Pancreas (tissue), 10 donors: ENCODE measurements at regions of chr15 and their contacts with region 1.

Region 1: GRCh38 chr15:78308422-78309032 is 9.1 kb upstream of the SKIC8 start:
- DNase-seq: peak in 5 of 6 donors; percentile 41 to 83 (median 56)
- ATAC-seq: peak; percentile 67 to 93 (median 91)
- H3K4me3 ChIP-seq: no peak overlapping the region
- H3K27ac ChIP-seq: no peak overlapping the region
- H3K4me1 ChIP-seq: no peaks in the 10 kb centered on the region
- H3K27me3 ChIP-seq: no peaks in the 10 kb centered on the region
- CTCF ChIP-seq: peak; percentile 12 to 68 (median 57)

Region 2: DNA sequence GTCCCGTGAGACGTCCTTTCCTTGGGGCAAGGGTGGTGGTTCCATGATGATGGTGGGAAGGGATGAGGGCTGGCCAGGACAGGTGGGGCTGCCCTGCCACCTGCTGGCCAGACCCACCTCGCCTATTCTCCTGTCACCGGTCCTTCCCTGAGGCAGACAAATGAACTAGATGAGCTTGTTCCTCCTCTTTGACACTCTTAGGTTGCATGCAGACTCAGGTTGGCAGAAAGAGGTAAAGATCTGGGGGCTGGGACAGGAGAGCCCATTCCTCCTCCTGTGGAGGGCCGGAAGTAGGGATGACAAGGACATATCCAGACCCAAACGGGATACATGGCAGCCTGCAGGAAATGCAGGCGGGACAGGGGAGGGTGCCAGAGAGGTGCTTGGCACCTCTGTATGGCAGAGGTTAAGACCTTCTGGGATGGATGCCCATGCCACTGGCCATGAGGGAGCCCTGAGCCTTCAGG is 112.8 kb before region 1 on chr15:
- intact Hi-C with region 1: no loop called
- DNase-seq: peak in 2 of 6 donors; percentile 15 to 48
- ATAC-seq: peak; percentile 82 to 98 (median 93)
- H3K4me3 ChIP-seq: no peak overlapping the region
- H3K27ac ChIP-seq: no peak overlapping the region
- H3K4me1 ChIP-seq: no peaks in the 10 kb centered on the region
- H3K27me3 ChIP-seq: no peaks in the 10 kb centered on the region
- CTCF ChIP-seq: peak; percentile 56 to 73 (median 66)

Region 3: DNA sequence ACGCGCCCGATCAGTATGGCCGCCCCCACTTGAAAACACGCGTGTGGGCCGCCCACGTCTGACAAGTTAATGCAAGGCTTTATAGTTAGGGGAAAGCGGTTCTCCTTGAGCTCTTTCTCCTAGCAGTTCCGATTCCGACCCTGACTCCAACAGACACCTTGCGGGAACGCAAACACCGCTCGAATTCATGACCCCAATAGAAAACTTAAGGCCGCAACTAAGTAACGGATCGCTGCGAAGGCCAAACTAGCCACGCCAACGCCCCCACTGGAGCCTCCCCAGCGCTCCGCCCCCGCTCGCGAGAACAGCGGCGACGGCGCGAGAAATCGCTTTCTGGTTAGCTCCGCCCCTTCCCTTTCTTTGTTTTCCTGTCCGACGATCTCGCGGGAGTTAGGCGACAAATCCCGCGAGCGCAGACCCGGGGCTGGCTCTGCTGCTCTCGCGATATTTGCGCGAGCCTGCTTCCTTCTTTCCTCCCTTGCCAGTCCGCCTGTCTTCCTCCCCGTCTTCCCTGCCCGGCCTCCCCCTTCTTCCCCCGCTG is 129.3 kb after region 1 on chr15 and contains the start of gene IREB2:
- intact Hi-C with region 1: no loop called
- DNase-seq: peak; percentile 96 to 99 (median 97)
- ATAC-seq: peak; percentile 94 to 98 (median 96)
- H3K4me3 ChIP-seq: peak within 1 kb of the TSS; percentile 78 to 98 (median 96)
- H3K27ac ChIP-seq: peak within 1 kb of the TSS; percentile 65 to 88 (median 76)
- H3K4me1 ChIP-seq: peaks cover 18 to 33% (median 30%) of the 10 kb centered on the region in 3 donors
- H3K27me3 ChIP-seq: no peaks in the 10 kb centered on the region
- CTCF ChIP-seq: no peak
- total RNA-seq, gene IREB2: 18.2 to 34.0 (median 22.3) TPM

Region 4: DNA sequence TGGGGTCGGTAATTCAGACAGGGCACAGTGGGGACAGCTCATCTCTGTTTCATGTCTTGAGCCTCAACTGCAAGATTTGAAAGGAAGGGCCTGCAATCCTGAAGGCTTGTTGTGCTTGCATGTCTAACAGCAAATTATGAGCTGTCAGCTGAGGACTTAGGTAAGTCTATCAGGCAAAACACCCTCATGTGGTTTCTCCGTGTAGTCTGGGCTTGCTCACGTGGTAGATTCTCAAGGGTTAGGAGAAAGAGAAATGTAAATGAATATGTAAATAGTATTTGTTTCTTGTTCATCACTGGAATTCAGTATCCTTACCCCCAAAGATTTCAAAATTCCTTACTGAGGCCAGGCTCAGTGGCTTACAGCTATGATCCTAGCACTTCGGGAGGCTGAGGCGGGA is 168.8 kb after region 1 on chr15:
- intact Hi-C with region 1: loop called in 2 of 3 experiments (anchors 10 kb)
- DNase-seq: no peak
- ATAC-seq: no peak
- H3K4me3 ChIP-seq: no peak overlapping the region
- H3K27ac ChIP-seq: no peak overlapping the region
- H3K4me1 ChIP-seq: no peaks in the 10 kb centered on the region
- H3K27me3 ChIP-seq: no peaks in the 10 kb centered on the region
- CTCF ChIP-seq: no peak